ENCODE measurements at regions of chr10 and their contacts with region 1.

Region 1: DNA sequence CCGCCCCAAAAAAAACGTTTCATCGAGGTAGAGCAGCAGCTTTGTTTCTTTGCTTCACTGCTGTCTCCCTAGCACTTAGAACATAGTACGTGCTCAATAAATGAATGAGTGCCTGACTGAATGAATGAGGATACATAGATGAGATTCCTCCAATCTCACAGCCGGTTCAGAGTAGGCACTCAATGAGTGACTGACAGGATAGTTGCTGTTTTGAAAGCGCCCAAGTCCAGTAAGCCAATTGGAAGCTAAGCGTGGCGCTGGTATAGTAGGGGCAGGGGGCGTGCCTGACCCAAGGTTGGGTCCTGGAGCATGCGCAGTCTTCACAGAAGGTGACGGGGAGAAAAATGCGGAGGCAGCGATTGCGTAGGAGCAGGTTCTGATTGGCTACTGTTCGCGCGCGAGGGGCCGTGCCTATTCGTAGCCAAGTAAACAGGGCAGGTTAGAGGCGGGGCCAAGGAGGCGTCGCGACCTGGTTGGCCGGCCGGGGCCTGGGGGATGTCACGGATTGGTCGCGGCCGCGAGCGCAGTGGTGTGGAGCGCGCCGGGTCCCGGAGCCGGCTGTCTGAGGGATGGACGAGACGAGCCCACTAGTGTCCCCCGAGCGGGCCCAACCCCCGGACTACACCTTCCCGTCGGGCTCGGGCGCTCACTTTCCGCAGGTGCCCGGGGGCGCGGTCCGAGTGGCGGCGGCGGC is at the start of gene PI4K2A:
- DNase-seq: peak; percentile 93 to 96
- H3K4me3 ChIP-seq: peak within 1 kb of the TSS; percentile 93
- H3K27ac ChIP-seq: no peak within 1 kb of the TSS
- H3K4me1 ChIP-seq: peaks cover 9% of the 10 kb centered on the region
- H3K27me3 ChIP-seq: no peaks in the 10 kb centered on the region
- CTCF ChIP-seq: no peak
- total RNA-seq, gene PI4K2A: 16.0 and 20.3 TPM in 2 replicates

Region 2: GRCh38 chr10:97475936-97476594 is 164.3 kb before region 1 on chr10:
- CTCF ChIA-PET with region 1: no interaction called
- POLR2A ChIA-PET with region 1: interaction called, 11 read pairs
- intact Hi-C with region 1: no loop called
- DNase-seq: no peak
- H3K4me3 ChIP-seq: no peak overlapping the region
- H3K27ac ChIP-seq: no peak overlapping the region
- H3K4me1 ChIP-seq: 0 out of 2 replicates have a peak, but pooled peaks cover 1% of the 10 kb centered on the region
- H3K27me3 ChIP-seq: no peaks in the 10 kb centered on the region
- CTCF ChIP-seq: no peak

Region 3: GRCh38 chr10:97543025-97543575 is 97.2 kb before region 1 on chr10:
- CTCF ChIA-PET with region 1: no interaction called
- POLR2A ChIA-PET with region 1: interaction called, 19 read pairs
- intact Hi-C with region 1: no loop called
- DNase-seq: peak; percentile 74 to 83
- H3K4me3 ChIP-seq: peak overlapping the region; percentile 10; the same call in 1 of the 2 replicates
- H3K27ac ChIP-seq: peak overlapping the region; percentile 80
- H3K4me1 ChIP-seq: peaks cover 50% of the 10 kb centered on the region
- H3K27me3 ChIP-seq: no peaks in the 10 kb centered on the region
- CTCF ChIP-seq: no peak

Region 4: GRCh38 chr10:97748116-97748515 is 107.8 kb after region 1 on chr10:
- CTCF ChIA-PET with region 1: no interaction called
- POLR2A ChIA-PET with region 1: no interaction called
- intact Hi-C with region 1: no loop called
- DNase-seq: no peak
- H3K4me3 ChIP-seq: no peak overlapping the region
- H3K27ac ChIP-seq: no peak overlapping the region
- H3K4me1 ChIP-seq: no peaks in the 10 kb centered on the region
- H3K27me3 ChIP-seq: no peaks in the 10 kb centered on the region
- CTCF ChIP-seq: no peak

Region 5: DNA sequence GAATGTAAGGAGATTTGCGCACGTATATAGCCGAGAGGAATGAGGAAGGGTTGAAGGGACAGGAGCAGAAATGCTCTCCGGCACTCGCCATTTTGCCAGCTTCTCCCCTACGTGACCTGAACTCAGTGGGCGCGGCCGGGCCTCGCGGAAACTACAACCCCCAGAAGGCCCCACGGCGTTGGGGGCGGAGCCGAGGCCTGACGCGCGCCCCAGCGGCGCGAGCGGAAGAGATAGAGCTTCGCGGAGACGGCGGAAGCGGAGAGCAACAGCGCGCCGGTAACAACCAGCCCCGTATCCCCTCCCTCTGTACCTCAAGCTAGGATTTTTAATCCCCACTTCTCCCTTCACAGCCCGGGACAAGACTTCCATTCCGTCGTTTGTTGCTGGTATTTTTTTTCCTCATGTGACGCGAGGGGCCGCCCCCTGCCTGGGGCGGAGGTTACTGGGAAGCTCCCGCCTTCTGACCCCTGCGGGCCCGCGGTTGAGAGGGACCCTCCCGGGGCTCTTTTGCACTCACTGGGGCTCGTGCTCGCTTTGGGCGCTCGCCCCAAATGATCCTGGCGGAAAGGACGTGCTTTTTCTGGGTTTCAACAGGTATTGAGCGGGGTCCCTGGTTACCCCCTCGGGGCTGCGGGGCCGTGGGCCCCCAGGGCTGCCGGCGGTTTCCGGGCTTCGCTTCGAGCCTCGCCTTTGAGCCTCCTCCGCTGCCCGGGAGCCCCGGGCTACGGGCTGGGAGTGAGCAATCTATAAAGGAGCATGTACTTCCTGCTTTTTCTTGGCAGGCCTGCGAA is 494.3 kb after region 1 on chr10 and contains the start of gene R3HCC1L:
- CTCF ChIA-PET with region 1: no interaction called
- POLR2A ChIA-PET with region 1: no interaction called
- intact Hi-C with region 1: no loop called
- DNase-seq: peak; percentile 58 to 83
- H3K4me3 ChIP-seq: peak within 1 kb of the TSS; percentile 97
- H3K27ac ChIP-seq: peak within 1 kb of the TSS; percentile 72
- H3K4me1 ChIP-seq: 0 out of 2 replicates have a peak, but pooled peaks cover 7% of the 10 kb centered on the region
- H3K27me3 ChIP-seq: no peaks in the 10 kb centered on the region
- CTCF ChIP-seq: no peak
- total RNA-seq, gene R3HCC1L: 6.5 and 7.0 TPM in 2 replicates